ENCODE measurements at regions of chr6 and their contacts with region 1.

Region 1: GRCh38 chr6:43386492-43386891 is 17.0 kb upstream of the ZNF318 start:
- DNase-seq: no peak
- ATAC-seq: no peak

Region 2: GRCh38 chr6:42928986-42929820 is 457.3 kb before region 1 on chr6 and contains the start of gene CNPY3:
- intact Hi-C with region 1: no loop called
- DNase-seq: peak; percentile 97
- ATAC-seq: peak; percentile 96
- total RNA-seq, gene CNPY3: 22.9 TPM

Region 3: DNA sequence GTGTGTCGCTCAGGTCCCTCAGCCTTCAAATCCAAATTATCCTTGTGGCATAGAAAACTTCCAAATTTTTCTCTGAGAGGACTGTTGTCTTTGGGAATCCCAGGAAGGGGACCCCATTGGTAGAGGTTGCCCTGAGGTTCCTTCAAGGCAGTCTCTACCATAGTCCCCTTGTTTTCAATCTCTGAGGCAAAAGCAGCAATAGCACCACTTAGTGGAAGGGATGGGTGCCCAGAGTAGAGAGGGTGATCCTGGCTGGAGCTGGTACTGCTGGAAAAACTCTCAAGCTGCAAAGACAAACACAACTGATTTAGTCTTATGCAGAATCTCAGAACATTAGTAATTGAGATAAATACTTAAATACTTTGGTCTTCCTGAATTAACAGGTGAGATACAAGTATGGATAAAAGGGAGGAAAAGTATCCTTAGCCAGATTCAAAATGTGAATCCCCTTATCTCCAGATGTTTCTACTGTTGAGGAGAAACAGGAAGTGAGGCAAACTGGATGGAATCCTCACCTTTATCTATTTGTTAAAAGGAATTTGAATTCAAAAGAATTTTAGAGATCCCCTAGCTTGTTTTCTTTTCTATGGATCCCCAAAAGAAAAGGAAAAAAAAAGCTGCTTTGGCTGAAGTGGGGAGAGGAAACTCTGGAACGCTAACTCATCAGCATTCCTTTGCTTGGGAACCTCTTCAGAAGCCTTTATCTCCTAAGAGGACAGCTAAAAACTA is 30.5 kb before region 1 on chr6:
- intact Hi-C with region 1: no loop called
- DNase-seq: no peak
- ATAC-seq: peak; percentile 76

Region 4: GRCh38 chr6:43506667-43507471 is 120.4 kb after region 1 on chr6:
- intact Hi-C with region 1: loop called (anchors 1 kb)
- DNase-seq: no peak
- ATAC-seq: peak; percentile 48

Region 5: DNA sequence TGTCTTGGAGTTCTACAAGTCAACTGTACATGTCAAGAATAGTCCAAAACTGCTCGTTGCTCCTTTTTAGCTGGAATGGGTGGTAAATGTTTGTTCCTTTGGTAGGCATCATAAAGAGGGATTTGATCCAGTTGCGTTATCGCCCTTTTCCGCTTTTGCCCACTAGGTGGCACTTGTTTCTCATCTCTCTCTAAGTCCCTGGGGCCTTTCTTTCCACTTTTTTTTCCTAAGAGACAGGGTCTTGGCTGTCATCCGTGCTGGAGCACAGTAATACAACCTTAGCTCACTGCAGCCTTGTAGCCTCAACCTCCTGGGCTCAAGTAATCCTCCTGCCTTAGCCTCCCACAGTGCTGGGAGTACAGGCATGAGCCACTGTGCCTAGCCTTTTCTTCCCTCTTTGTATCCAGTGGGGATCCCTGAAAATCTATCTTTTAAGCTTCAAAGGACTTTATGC is 221.8 kb after region 1 on chr6:
- intact Hi-C with region 1: no loop called
- DNase-seq: no peak
- ATAC-seq: peak; percentile 57

Measured in Right ventricle myocardium inferior (tissue), 1 donor.